RWPE1 (cell line): ENCODE measurements at regions of chr5 and their contacts with region 1.

Region 1: DNA sequence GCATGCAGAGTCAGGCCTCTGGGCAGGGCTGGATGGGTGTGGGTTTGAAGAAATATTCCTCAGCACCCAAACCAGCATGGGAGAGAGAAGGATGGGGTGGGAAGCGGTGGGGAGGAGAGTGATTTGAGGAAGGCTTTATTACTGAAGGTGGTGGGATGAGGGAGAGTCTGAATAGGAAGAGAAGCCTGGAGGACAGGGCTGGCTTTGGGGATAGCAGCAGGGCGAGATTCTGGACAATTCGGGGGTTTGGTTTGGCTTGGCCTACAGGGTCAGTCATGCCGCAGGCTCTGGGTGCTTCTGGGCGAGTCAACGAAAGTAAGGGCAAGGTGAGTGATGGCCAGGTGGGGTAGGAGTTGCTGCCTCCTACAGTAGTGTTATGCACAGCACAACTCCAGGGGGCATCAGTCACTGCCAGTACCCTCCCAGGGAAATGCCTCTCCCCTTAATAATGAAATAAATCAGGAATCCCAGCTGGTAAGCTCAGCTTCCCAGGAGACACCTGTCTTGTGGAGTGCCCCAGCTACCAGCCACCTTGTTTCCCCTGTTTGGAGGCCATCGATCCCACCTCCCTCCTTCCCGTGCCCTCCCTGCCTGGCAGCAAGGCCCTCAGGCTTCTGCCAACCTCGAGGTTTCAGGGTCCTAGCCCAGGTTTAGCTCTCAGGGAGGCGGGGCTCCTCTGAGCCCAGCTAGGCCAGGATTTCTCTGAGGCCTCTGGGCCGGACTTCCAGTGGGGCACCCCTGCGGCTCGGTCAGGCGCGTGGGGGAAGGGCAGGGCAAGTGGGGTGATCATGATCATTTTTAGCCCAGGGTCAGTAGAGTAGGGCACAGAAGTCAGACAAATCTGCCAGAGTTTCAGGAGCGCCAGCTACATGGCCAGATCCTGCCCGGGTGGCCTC is 741 bp upstream of the NKX2-5 start:
- DNase-seq: no peak
- H3K27ac ChIP-seq: no peak overlapping the region
- CTCF ChIP-seq: no peak

Region 2: GRCh38 chr5:172747471-172748000 is 488.2 kb before region 1 on chr5:
- CTCF ChIA-PET with region 1: interaction called, 10 read pairs
- POLR2A ChIA-PET with region 1: no interaction called
- DNase-seq: no peak
- H3K27ac ChIP-seq: no peak overlapping the region
- CTCF ChIP-seq: no peak

Region 3: DNA sequence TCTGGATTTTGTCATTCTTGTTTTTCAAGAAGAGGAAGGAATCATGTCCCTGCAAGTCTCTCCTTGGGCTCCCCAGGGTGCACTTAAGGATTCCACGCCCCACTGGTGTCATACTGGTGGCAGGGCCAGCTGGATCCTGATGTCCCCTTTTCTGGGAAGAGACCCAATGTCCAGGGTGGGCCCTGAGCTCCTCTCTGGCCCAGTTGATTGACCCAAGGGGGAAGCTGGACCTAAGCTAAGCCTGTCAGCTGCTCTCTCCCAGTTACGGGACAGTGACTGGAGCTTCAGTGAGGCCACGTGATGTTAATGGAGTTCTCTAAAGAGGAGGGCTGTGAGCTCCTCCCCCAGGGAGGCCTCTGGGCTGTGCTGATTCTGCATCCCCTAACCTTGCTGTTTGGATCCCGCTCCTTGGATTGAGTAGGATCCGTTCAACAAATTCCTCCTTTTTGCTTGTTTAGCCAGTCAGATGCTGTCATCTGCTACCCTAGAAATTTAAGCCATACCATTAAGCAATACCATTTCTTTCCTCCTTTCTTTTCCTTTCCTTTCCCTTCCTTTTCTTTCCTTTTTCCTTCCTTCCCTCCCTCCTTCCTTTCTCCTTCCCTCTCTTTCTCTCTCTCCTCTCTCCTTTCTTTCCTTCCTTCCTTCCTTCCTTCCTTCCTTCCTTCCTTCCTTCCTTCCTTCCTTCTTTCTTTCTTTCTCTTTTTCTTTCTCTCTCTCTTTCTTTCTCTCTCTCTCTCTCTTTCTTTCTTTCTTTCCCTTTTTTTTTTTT is 17.9 kb before region 1 on chr5:
- CTCF ChIA-PET with region 1: no interaction called
- POLR2A ChIA-PET with region 1: no interaction called
- DNase-seq: no peak
- H3K27ac ChIP-seq: no peak overlapping the region
- CTCF ChIP-seq: no peak